PC-9 (cell line): ENCODE measurements at regions of chr17 and their contacts with region 1.

Region 1: DNA sequence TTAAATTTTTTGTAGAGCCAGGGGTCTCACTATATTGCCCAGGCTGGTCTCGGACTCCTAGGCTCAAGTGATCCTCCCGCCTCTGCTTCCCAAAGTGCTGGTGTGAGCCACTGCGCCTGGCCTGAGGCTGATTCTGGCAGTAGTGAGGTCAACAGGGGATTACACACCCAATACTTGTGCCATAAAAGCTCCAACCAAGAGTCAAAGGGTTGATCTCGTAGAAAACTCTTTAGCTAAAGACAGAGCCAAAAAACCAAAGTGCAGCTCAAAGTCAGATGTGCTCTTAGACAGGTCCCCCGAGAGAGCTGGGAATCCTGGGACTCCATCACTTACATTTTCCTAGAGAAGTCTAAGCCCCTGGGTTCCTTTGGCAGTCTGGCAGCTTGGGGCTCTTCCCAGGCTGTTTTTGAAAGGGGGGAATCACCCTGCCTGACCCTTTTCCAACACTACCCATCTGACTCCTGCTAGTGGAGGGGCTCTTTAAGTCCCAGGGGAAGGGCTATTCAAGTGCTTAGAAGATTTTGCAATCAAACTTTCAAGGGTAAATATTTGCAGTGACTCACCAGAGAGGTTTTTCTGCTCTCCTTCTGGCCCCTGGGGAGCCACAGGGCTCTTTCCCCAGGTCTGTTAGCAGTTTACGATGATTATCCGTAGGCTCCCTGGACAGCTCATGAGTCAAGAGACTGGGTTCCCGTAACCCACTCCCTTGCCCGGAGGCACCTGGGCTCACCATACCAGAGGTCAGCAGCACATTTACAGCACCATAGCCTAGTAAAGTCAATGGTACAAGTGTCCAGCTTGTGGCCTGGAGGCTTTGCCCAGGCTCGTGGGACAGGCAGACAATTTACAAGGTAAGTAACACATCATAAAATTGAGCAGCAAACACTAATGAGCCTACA is 408.7 kb downstream of the SLC39A11 start:
- DNase-seq: peak; percentile 92 to 100
- H3K4me3 ChIP-seq: peak overlapping the region; percentile 34; the same call in 1 of the 2 replicates
- H3K27ac ChIP-seq: peak overlapping the region; percentile 86
- H3K4me1 ChIP-seq: peaks cover 62% of the 10 kb centered on the region
- H3K27me3 ChIP-seq: no peaks in the 10 kb centered on the region
- CTCF ChIP-seq: no peak

Region 2: DNA sequence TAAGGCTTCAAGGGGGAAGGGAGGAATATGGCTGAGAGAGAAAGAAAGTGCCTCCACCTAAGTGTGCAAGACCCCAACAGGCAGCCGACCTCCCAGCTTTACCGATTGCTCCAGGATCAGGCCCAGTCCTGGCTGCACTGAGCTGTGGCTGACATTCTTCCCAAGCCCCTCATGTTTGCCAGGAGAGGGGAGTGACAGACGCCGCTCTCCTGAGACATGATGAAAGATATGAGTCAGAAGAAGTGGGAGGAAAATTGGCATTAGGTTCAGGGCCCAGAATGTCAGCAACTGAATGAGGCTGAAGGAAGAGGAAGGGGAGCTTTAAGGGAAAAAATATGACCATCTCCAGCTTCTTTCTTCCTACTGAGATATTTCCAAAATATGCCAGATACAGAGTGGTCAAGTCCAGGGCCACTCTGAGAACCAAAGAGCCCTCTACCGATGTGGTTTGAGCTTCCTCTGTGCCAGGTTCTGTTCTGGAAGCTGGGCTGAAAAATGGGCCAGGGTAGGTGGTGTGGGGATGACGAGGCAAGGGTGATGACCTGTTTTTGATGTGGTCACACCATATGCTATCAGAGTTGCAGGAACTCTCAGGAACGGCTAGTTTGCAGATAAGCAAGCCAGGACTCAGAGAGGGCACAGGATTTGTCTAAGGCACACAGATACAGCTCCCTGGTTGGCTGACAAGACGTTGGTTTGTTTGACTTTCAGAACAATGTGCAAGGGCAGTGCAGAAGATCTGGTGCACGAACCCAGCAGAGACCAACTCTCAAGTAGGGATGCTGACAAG is 386.2 kb before region 1 on chr17:
- CTCF ChIA-PET with region 1: no interaction called
- POLR2A ChIA-PET with region 1: no interaction called
- intact Hi-C with region 1: no loop called
- DNase-seq: peak; percentile 4 to 49
- H3K4me3 ChIP-seq: no peak overlapping the region
- H3K27ac ChIP-seq: 0 out of 2 replicates have a peak overlapping the region, but pooled peaks have one; percentile 2
- H3K4me1 ChIP-seq: peaks cover 23% of the 10 kb centered on the region
- H3K27me3 ChIP-seq: no peaks in the 10 kb centered on the region
- CTCF ChIP-seq: no peak

Region 3: DNA sequence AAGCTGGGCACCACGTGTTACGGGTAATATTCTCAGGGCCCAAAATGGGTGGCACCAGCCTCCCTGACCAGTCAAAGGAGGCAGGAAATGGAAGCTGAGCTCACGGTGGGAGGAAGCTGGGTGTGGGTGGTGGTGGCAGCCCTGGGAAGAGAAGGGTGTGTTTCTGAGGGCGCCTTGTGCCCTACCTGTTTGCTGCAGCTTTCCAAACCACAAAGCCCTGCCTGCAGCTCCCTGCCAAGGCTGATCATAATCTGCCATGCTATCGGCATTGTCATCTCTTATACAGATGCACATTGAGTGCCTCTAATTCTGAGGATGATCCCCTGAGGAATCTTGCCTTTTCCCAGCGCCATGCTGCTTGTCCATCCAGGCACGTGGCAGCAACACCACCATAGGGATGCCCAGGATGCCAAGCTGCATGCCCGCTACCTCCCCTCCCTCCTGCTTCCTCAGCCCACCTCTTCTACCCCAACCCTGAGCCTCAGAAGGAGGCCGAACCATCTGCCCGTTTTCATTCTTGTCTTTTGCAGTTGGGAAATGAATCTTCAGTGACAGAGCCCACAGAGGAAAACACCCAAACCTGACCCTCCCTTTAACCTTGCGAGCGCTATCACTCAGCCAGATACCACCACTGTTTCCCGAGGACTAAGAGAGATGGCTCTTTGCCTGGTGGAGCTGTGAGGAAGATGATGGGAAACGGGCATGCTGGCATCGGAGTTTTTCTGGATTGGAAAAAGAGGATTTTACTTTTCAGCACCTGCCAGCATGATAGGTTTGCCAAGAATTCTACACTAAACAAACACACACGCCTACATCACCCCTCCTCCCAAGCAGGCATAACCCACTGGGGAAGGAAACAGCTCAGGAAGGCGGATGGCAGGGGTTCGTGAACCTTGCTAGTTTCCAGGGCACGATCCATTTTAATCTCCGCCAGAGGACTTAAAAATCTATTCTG is 48.8 kb before region 1 on chr17:
- CTCF ChIA-PET with region 1: no interaction called
- POLR2A ChIA-PET with region 1: no interaction called
- intact Hi-C with region 1: loop called (anchors 1 kb)
- DNase-seq: peak; percentile 71 to 73
- H3K4me3 ChIP-seq: no peak overlapping the region
- H3K27ac ChIP-seq: 0 out of 2 replicates have a peak overlapping the region, but pooled peaks have one; percentile 36
- H3K4me1 ChIP-seq: peaks cover 28% of the 10 kb centered on the region
- H3K27me3 ChIP-seq: no peaks in the 10 kb centered on the region
- CTCF ChIP-seq: no peak

Region 4: GRCh38 chr17:72640415-72641165 is 43.2 kb before region 1 on chr17:
- CTCF ChIA-PET with region 1: no interaction called
- POLR2A ChIA-PET with region 1: no interaction called
- intact Hi-C with region 1: loop called (anchors 1 kb)
- DNase-seq: peak; percentile 69 to 84
- H3K4me3 ChIP-seq: peak overlapping the region; percentile 45
- H3K27ac ChIP-seq: peak overlapping the region; percentile 46
- H3K4me1 ChIP-seq: peaks cover 24% of the 10 kb centered on the region
- H3K27me3 ChIP-seq: no peaks in the 10 kb centered on the region
- CTCF ChIP-seq: no peak

Region 5: GRCh38 chr17:72661093-72661944 is 22.4 kb before region 1 on chr17:
- CTCF ChIA-PET with region 1: no interaction called
- POLR2A ChIA-PET with region 1: interaction called, 4 read pairs
- intact Hi-C with region 1: loop called (anchors 1 kb)
- DNase-seq: peak; percentile 90 to 98
- H3K4me3 ChIP-seq: 0 out of 2 replicates have a peak overlapping the region, but pooled peaks have one; percentile 22
- H3K27ac ChIP-seq: peak overlapping the region; percentile 92
- H3K4me1 ChIP-seq: peaks cover 44% of the 10 kb centered on the region
- H3K27me3 ChIP-seq: no peaks in the 10 kb centered on the region
- CTCF ChIP-seq: peak; percentile 63

Region 6: DNA sequence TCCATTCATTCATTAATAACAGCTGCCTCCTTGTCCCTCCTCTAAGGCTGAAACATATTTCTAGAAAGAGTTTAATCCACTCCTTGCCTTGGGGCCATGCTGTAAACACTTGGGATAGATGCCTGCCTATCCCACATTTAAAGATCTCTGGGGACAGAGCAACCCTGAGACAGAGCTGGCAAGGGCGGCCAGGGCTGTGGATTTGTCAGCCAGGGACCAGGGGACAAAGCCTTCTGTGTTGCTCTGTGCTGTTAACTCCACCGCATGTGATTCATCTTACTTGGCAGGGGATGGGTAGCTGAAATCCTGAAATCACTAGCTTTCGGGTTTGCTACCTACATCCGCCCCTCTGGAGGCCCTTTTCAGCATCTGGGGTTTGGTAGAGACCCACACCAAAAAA is 15.8 kb after region 1 on chr17:
- CTCF ChIA-PET with region 1: interaction called, 11 read pairs
- POLR2A ChIA-PET with region 1: no interaction called
- intact Hi-C with region 1: no loop called
- DNase-seq: no peak
- H3K4me3 ChIP-seq: no peak overlapping the region
- H3K27ac ChIP-seq: no peak overlapping the region
- H3K4me1 ChIP-seq: no peaks in the 10 kb centered on the region
- H3K27me3 ChIP-seq: no peaks in the 10 kb centered on the region
- CTCF ChIP-seq: no peak